ENCODE measurements at regions of chr22 and their contacts with region 1.

Region 1: GRCh38 chr22:37199103-37199759 is 11.2 kb upstream of the C1QTNF6 start:
- DNase-seq: peak; percentile 94 to 100 (median 99)
- ATAC-seq: peak; percentile 98
- H3K4me3 ChIP-seq: peak overlapping the region; percentile 90
- H3K4me3 Mint-ChIP-seq: peak overlapping the region; percentile 80 to 90 (median 86)
- H3K27ac ChIP-seq: peak overlapping the region; percentile 86
- H3K27ac Mint-ChIP-seq: peak overlapping the region; percentile 87 to 99 (median 96)
- H3K4me1 ChIP-seq: peaks cover 24 to 33% of the 10 kb centered on the region in 2 donors
- H3K4me1 Mint-ChIP-seq: peaks cover 19 to 60% (median 41%) of the 10 kb centered on the region in 7 donors
- H3K27me3 ChIP-seq: no peaks in the 10 kb centered on the region
- H3K27me3 Mint-ChIP-seq: no peaks in the 10 kb centered on the region

Region 2: DNA sequence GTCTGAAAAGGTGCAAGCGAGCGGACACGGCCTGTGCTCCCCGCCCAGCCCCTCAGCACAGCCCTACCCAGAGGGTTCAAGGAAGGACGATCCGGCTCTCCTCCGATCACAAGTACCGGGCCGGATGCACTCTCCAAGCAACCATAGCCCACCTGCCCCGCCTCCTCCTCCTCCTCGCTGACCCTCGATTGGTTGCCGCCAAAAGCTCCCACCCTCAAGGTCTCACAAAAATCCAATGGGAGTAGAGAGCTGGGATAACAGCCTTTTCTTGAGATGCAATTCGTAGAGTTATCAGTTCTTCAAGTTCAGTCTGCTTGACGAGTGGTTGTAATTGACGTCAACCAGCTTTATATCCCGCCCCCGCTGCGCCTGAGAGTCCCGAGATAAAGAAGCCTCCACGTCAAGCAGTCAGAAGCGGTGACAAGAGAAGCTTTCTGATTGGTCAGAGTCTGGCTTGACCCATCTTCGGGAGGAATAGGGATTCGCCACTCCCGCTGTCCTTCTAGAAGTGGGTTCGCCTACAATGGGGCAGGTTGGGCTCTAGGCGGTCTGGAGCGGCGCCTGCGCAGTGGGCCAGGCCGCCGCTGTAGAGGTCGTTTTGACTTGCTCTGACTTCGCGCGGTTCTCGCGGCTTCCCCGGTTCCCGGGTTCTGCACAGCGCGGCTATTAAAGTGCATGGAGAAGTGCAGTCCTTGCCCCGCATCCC is 423.1 kb before region 1 on chr22 and contains the start of gene IFT27:
- CTCF ChIA-PET with region 1: interaction called, 3 read pairs
- POLR2A ChIA-PET with region 1: interaction called, 3 read pairs
- intact Hi-C with region 1: loop called (anchors 1 kb)
- DNase-seq: peak; percentile 72 to 99 (median 98)
- ATAC-seq: peak; percentile 92
- H3K4me3 ChIP-seq: peak within 1 kb of the TSS; percentile 65
- H3K4me3 Mint-ChIP-seq: peak within 1 kb of the TSS; percentile 85 to 97 (median 92)
- H3K27ac ChIP-seq: peak within 1 kb of the TSS; percentile 90
- H3K27ac Mint-ChIP-seq: peak within 1 kb of the TSS; percentile 92 to 99 (median 96)
- H3K4me1 ChIP-seq: peaks cover 13 to 15% of the 10 kb centered on the region in 2 donors
- H3K4me1 Mint-ChIP-seq: peaks cover 18 to 44% (median 31%) of the 10 kb centered on the region in 7 donors
- H3K27me3 ChIP-seq: no peaks in the 10 kb centered on the region
- H3K27me3 Mint-ChIP-seq: no peaks in the 10 kb centered on the region
- total RNA-seq, gene IFT27: 16.6 to 40.9 (median 32.0) TPM

Region 3: DNA sequence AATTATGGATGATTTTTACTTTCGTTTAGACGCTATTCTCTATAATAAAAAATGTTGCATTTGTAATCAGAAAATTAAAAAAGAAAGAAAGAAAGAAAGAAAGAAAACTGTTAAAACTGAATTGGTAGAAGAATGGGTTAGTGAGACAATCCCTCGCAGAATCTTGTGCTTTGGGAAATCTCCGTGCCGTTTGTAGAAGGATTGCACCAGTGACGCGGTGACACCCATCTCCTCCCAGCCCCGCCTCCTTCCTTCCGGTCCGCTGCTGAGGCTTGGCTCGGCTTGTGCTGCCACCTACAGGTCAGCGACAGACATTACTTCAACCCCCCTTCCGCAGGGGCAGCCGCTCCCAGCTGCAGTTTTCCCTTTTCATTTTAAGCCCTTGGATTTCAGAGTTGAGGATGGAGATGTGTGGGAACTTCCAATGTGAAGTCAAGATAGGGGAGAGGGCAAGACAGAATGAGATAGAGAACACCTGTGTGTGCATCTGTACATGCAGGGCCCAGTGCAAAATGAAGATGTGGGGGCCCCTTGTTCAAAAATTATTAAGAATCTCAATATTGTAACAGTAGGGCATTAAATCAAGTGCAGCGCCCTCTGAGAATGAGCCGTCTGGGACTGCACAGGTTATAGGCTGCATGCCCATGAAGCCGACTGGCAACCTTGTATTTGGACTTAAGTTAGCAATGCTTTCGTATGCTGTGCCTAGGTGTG is 221.1 kb before region 1 on chr22:
- CTCF ChIA-PET with region 1: interaction called, 4 read pairs
- POLR2A ChIA-PET with region 1: no interaction called
- intact Hi-C with region 1: loop called in 1 of 2 experiments (anchors 5 kb)
- DNase-seq: peak; percentile 76 to 90 (median 88)
- ATAC-seq: peak; percentile 98
- H3K4me3 ChIP-seq: peak overlapping the region; percentile 69
- H3K4me3 Mint-ChIP-seq: peak overlapping the region; percentile 87 to 99 (median 96)
- H3K27ac ChIP-seq: peak overlapping the region; percentile 77
- H3K27ac Mint-ChIP-seq: peak overlapping the region; percentile 81 to 97 (median 96)
- H3K4me1 ChIP-seq: peaks cover 0 to 4% of the 10 kb centered on the region in 2 donors
- H3K4me1 Mint-ChIP-seq: peaks cover 5 to 16% (median 9%) of the 10 kb centered on the region in 7 donors
- H3K27me3 ChIP-seq: no peaks in the 10 kb centered on the region
- H3K27me3 Mint-ChIP-seq: peaks cover 0 to 25% (median 4%) of the 10 kb centered on the region in 5 donors

Region 4: GRCh38 chr22:36991206-36991605 is 208.0 kb before region 1 on chr22:
- CTCF ChIA-PET with region 1: no interaction called
- POLR2A ChIA-PET with region 1: no interaction called
- intact Hi-C with region 1: no loop called
- DNase-seq: no peak
- ATAC-seq: no peak
- H3K4me3 ChIP-seq: no peak overlapping the region
- H3K4me3 Mint-ChIP-seq: no peak overlapping the region
- H3K27ac ChIP-seq: no peak overlapping the region
- H3K27ac Mint-ChIP-seq: no peak overlapping the region
- H3K4me1 ChIP-seq: no peaks in the 10 kb centered on the region
- H3K4me1 Mint-ChIP-seq: no peaks in the 10 kb centered on the region
- H3K27me3 ChIP-seq: peaks cover 0 to 4% of the 10 kb centered on the region in 2 donors
- H3K27me3 Mint-ChIP-seq: peaks cover 19 to 50% (median 27%) of the 10 kb centered on the region in 5 donors

Region 5: GRCh38 chr22:37121887-37122591 is 77.2 kb before region 1 on chr22:
- CTCF ChIA-PET with region 1: interaction called, 4 read pairs
- POLR2A ChIA-PET with region 1: interaction called, 7 read pairs
- intact Hi-C with region 1: loop called (anchors 1 kb)
- DNase-seq: peak; percentile 62 to 98 (median 94)
- ATAC-seq: peak; percentile 99
- H3K4me3 ChIP-seq: peak overlapping the region; percentile 30
- H3K4me3 Mint-ChIP-seq: peak overlapping the region; percentile 69 to 91 (median 79)
- H3K27ac ChIP-seq: peak overlapping the region; percentile 96
- H3K27ac Mint-ChIP-seq: peak overlapping the region; percentile 95 to 100 (median 98)
- H3K4me1 ChIP-seq: peaks cover 21 to 30% of the 10 kb centered on the region in 2 donors
- H3K4me1 Mint-ChIP-seq: peaks cover 19 to 86% (median 65%) of the 10 kb centered on the region in 7 donors
- H3K27me3 ChIP-seq: no peaks in the 10 kb centered on the region
- H3K27me3 Mint-ChIP-seq: peaks cover 0 to 2% (median 0%) of the 10 kb centered on the region in 5 donors

Region 6: GRCh38 chr22:37173709-37174108 is 25.5 kb before region 1 on chr22:
- CTCF ChIA-PET with region 1: interaction called, 7 read pairs
- POLR2A ChIA-PET with region 1: interaction called, 11 read pairs
- intact Hi-C with region 1: no loop called
- DNase-seq: no peak
- ATAC-seq: no peak
- H3K4me3 ChIP-seq: no peak overlapping the region
- H3K4me3 Mint-ChIP-seq: no peak overlapping the region
- H3K27ac ChIP-seq: no peak overlapping the region
- H3K27ac Mint-ChIP-seq: no peak overlapping the region
- H3K4me1 ChIP-seq: peaks cover 23 to 24% of the 10 kb centered on the region in 2 donors
- H3K4me1 Mint-ChIP-seq: peaks cover 22 to 48% (median 40%) of the 10 kb centered on the region in 7 donors
- H3K27me3 ChIP-seq: no peaks in the 10 kb centered on the region
- H3K27me3 Mint-ChIP-seq: peaks cover 0 to 9% (median 0%) of the 10 kb centered on the region in 5 donors

Region 7: GRCh38 chr22:37229805-37230672 is 30.8 kb after region 1 on chr22:
- CTCF ChIA-PET with region 1: interaction called, 11 read pairs
- POLR2A ChIA-PET with region 1: interaction called, 278 read pairs
- intact Hi-C with region 1: loop called (anchors 1 kb)
- DNase-seq: peak; percentile 60 to 93 (median 89)
- ATAC-seq: peak; percentile 93
- H3K4me3 ChIP-seq: peak overlapping the region; percentile 54
- H3K4me3 Mint-ChIP-seq: peak overlapping the region; percentile 75 to 99 (median 86)
- H3K27ac ChIP-seq: peak overlapping the region; percentile 90
- H3K27ac Mint-ChIP-seq: peak overlapping the region; percentile 96 to 100 (median 99)
- H3K4me1 ChIP-seq: peaks cover 80 to 92% of the 10 kb centered on the region in 2 donors
- H3K4me1 Mint-ChIP-seq: peaks cover 75 to 92% (median 87%) of the 10 kb centered on the region in 7 donors
- H3K27me3 ChIP-seq: no peaks in the 10 kb centered on the region
- H3K27me3 Mint-ChIP-seq: no peaks in the 10 kb centered on the region

Region 8: DNA sequence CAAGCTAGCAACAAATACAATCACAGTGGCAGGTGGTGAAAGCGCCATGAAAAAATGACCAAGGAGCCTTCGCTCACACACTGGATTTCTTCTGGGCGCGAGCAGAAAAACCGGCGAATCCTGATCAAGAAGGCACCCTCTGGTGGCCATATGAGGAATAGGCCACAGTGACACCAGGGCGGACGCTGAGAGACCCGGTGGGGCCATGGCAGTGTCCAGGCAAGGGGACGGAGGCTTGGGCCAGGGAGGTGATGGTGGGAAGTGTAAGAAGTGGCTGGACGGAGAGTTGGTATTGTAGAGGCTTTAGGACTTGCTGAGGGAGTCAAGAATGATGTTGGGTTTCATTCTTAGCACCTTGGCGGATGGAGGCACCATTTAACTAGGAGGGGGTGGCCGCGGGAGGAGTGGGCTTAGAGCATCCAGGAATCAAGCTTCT is 61.7 kb after region 1 on chr22:
- CTCF ChIA-PET with region 1: interaction called, 12 read pairs
- POLR2A ChIA-PET with region 1: interaction called, 8 read pairs
- intact Hi-C with region 1: loop called in 1 of 2 experiments (anchors 1 kb)
- DNase-seq: peak; percentile 46 to 71 (median 64)
- ATAC-seq: peak; percentile 91
- H3K4me3 ChIP-seq: no peak overlapping the region
- H3K4me3 Mint-ChIP-seq: peak overlapping the region in 6 of 10 donors; percentile 1 to 33 (median 15)
- H3K27ac ChIP-seq: no peak overlapping the region
- H3K27ac Mint-ChIP-seq: peak overlapping the region in 8 of 9 donors; percentile 7 to 86 (median 56)
- H3K4me1 ChIP-seq: peaks cover 7 to 24% of the 10 kb centered on the region in 2 donors
- H3K4me1 Mint-ChIP-seq: peaks cover 23 to 32% (median 27%) of the 10 kb centered on the region in 7 donors
- H3K27me3 ChIP-seq: no peaks in the 10 kb centered on the region
- H3K27me3 Mint-ChIP-seq: peaks cover 0 to 13% (median 0%) of the 10 kb centered on the region in 5 donors

Measured in naive thymus-derived CD4-positive, alpha-beta T cell (primary cell).